Heart left ventricle (tissue), 16 donors: ENCODE measurements at regions of chr4 and their contacts with region 1.

Region 1: GRCh38 chr4:38084877-38085711 is 124.9 kb downstream of the PTTG2 start:
- DNase-seq: no peak
- ATAC-seq: peak in 3 of 4 donors; percentile 12 to 35 (median 29)
- H3K4me3 ChIP-seq: no peak overlapping the region
- H3K27ac ChIP-seq: peak overlapping the region in 8 of 12 donors; percentile 18 to 95 (median 60)
- H3K4me1 ChIP-seq: peaks cover 0 to 84% (median 62%) of the 10 kb centered on the region in 12 donors
- H3K27me3 ChIP-seq: no peaks in the 10 kb centered on the region
- CTCF ChIP-seq: no peak
- POLR2A ChIP-seq: no peak

Region 2: GRCh38 chr4:38046728-38047489 is 38.2 kb before region 1 on chr4:
- intact Hi-C with region 1: no loop called
- DNase-seq: no peak
- ATAC-seq: no peak
- H3K4me3 ChIP-seq: no peak overlapping the region
- H3K27ac ChIP-seq: peak overlapping the region in 1 of 12 donors; percentile 27
- H3K4me1 ChIP-seq: peaks cover 0 to 28% (median 14%) of the 10 kb centered on the region in 12 donors
- H3K27me3 ChIP-seq: no peaks in the 10 kb centered on the region
- CTCF ChIP-seq: no peak
- POLR2A ChIP-seq: no peak

Region 3: GRCh38 chr4:38132107-38132673 is 47.1 kb after region 1 on chr4:
- intact Hi-C with region 1: loop called in 1 of 10 experiments (anchors 5 kb)
- DNase-seq: peak in 4 of 5 donors; percentile 49 to 69 (median 53)
- ATAC-seq: peak; percentile 54 to 88 (median 82)
- H3K4me3 ChIP-seq: peak overlapping the region in 1 of 12 donors; percentile 8
- H3K27ac ChIP-seq: peak overlapping the region; percentile 18 to 79 (median 64)
- H3K4me1 ChIP-seq: peaks cover 0 to 51% (median 25%) of the 10 kb centered on the region in 12 donors
- H3K27me3 ChIP-seq: no peaks in the 10 kb centered on the region
- CTCF ChIP-seq: no peak
- POLR2A ChIP-seq: no peak

Region 4: GRCh38 chr4:38154681-38155608 is 69.9 kb after region 1 on chr4:
- intact Hi-C with region 1: loop called in 1 of 10 experiments (anchors 5 kb)
- DNase-seq: peak; percentile 42 to 73 (median 69)
- ATAC-seq: peak; percentile 53 to 82 (median 77)
- H3K4me3 ChIP-seq: peak overlapping the region in 3 of 12 donors; percentile 3 to 18 (median 11)
- H3K27ac ChIP-seq: peak overlapping the region; percentile 59 to 79 (median 69)
- H3K4me1 ChIP-seq: peaks cover 0 to 48% (median 33%) of the 10 kb centered on the region in 12 donors
- H3K27me3 ChIP-seq: no peaks in the 10 kb centered on the region
- CTCF ChIP-seq: no peak
- POLR2A ChIP-seq: no peak

Region 5: GRCh38 chr4:38455092-38455862 is 370.2 kb after region 1 on chr4:
- intact Hi-C with region 1: no loop called
- DNase-seq: no peak
- ATAC-seq: no peak
- H3K4me3 ChIP-seq: no peak overlapping the region
- H3K27ac ChIP-seq: no peak overlapping the region
- H3K4me1 ChIP-seq: peaks cover 0 to 18% (median 0%) of the 10 kb centered on the region in 12 donors
- H3K27me3 ChIP-seq: no peaks in the 10 kb centered on the region
- CTCF ChIP-seq: no peak
- POLR2A ChIP-seq: no peak